B cell (primary cell): ENCODE measurements at regions of chr6 and their contacts with region 1.

Region 1: DNA sequence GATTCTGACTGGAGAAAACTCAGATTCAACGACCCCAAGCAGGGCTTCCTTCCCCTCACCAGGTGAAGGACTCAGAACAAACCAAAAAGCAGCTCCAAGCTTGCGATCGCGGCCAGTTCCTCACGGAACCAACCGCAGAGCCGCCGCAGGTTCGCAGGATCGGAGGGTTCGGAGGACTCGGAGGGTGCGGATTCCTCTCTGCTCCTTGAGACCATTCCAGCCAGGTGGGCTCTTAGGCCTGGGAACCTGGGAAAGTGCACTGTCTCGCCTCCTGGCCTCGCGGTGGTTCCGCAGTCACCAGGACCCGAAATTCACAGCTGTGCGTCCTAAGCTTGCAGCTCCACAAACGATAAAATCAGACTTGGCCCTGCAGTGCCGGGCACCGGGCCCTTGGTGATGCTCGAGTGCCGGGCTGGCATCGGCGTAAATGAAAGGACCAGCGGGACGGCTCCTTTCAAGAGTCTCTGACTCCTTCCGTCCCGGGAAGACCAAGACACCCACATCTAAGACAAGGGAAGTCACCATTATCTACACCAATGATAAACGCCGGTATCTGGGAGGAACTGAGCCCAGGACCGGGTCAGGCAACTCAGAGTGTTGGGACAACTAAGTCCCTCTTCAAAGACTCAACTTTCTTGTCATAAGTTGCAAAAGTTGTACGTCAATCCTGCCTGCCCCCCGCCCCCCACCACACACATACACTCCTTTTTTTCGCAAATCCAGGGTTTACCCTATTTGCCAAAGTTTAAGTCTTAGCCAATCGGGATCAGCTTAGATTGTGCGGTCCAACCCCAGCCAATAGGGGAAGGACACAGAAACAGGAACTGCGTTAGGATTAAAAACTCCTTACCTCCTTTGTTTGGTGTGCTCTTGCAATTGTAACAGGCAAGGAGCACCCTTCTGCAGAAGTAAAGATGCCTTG is 69.8 kb upstream of the PRSS16 start:
- DNase-seq: peak; percentile 90
- ATAC-seq: peak; percentile 86
- H3K4me3 ChIP-seq: peak overlapping the region; percentile 88 to 100 (median 98)
- H3K4me3 Mint-ChIP-seq: peak overlapping the region; percentile 96
- H3K27ac ChIP-seq: peak overlapping the region; percentile 34 to 78
- H3K27ac Mint-ChIP-seq: peak overlapping the region; percentile 91
- H3K4me1 ChIP-seq: peaks cover 0 to 7% of the 10 kb centered on the region in 2 donors
- H3K4me1 Mint-ChIP-seq: peaks cover 15% of the 10 kb centered on the region
- H3K27me3 ChIP-seq: no peaks in the 10 kb centered on the region
- H3K27me3 Mint-ChIP-seq: no peaks in the 10 kb centered on the region
- CTCF ChIP-seq: peak; percentile 71

Region 2: DNA sequence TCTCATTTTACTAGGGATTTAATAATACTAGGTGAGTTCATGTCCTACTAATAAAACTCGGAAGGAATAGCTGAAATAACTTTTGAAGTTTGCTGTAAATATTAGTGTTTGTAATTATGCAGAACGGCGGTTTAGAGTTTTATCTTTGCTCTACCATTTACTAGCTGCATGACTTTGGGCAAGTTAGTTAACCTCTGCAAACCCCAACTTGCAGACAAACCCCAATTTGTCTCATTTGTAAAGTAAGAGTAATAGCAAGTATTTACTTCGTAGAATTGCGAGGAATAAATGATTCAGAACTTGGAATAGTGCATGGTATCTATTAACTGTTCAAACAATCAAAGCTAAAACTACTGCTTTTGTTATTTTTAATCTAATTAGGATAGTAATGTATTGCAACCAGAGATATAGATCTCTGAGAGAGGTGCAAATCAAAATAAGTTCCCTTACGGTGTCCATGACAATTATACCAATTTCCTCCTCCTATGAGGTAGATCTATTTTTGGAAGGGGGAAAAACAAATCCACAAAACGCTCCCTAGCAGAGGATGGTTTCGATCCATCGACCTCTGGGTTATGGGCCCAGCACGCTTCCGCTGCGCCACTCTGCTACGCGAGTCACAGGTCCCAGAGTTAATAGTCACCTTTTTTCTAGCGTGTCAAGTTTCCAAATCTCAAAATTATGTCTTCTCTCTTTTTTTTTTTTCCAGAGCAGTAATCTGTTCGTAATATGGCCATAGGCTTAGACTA is 847.8 kb before region 1 on chr6:
- CTCF ChIA-PET with region 1: no interaction called
- POLR2A ChIA-PET with region 1: no interaction called
- intact Hi-C with region 1: no loop called
- DNase-seq: peak; percentile 63
- ATAC-seq: no peak
- H3K4me3 ChIP-seq: no peak overlapping the region
- H3K4me3 Mint-ChIP-seq: peak overlapping the region; percentile 64
- H3K27ac ChIP-seq: no peak overlapping the region
- H3K27ac Mint-ChIP-seq: peak overlapping the region; percentile 73
- H3K4me1 ChIP-seq: peaks cover 23 to 27% of the 10 kb centered on the region in 2 donors
- H3K4me1 Mint-ChIP-seq: peaks cover 26% of the 10 kb centered on the region
- H3K27me3 ChIP-seq: peaks cover 0 to 63% (median 62%) of the 10 kb centered on the region in 4 experiments
- H3K27me3 Mint-ChIP-seq: peaks cover 61% of the 10 kb centered on the region
- CTCF ChIP-seq: no peak

Region 3: DNA sequence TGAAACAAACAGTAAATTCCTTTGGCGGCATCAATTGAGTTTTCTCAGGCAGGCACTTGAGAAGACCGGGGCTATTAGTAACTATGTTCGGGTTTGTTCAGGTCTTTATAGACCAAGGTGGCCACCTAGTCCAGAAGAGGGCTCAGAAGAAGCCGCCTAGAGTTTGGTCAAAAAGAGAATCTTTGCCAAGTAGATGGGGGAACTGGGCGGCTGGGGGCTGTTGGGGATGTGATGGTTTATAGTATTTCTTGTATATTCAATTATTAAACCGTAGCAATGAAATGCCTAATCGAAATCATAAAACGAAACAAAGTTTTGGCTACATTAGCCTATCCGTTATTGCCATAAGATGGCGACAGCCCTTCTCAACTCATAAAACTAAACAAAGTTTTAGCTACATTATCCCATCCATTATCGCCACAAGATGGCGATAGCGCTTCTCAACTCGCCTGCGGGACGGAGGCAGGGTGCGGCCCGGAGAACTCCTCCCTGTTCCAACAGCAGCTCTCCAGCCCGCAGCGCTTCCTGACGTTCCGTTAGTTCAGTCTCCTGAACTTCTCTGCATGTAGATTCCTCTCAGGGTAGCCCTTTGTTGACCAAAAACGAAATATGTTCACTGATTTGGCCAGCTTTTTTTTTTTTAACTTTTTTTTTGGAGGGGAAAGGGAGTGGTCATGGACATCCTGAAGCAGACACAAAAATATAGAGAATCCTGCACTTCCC is 50.8 kb before region 1 on chr6:
- CTCF ChIA-PET with region 1: interaction called, 19 read pairs
- POLR2A ChIA-PET with region 1: no interaction called
- intact Hi-C with region 1: loop called (anchors 1 kb)
- DNase-seq: peak; percentile 93
- ATAC-seq: peak; percentile 76
- H3K4me3 ChIP-seq: peak overlapping the region; percentile 5 to 56 (median 40)
- H3K4me3 Mint-ChIP-seq: peak overlapping the region; percentile 87
- H3K27ac ChIP-seq: peak overlapping the region in 1 of 2 donors; percentile 56
- H3K27ac Mint-ChIP-seq: peak overlapping the region; percentile 85
- H3K4me1 ChIP-seq: peaks cover 13 to 18% of the 10 kb centered on the region in 2 donors
- H3K4me1 Mint-ChIP-seq: peaks cover 20% of the 10 kb centered on the region
- H3K27me3 ChIP-seq: no peaks in the 10 kb centered on the region
- H3K27me3 Mint-ChIP-seq: no peaks in the 10 kb centered on the region
- CTCF ChIP-seq: peak; percentile 92

Region 4: DNA sequence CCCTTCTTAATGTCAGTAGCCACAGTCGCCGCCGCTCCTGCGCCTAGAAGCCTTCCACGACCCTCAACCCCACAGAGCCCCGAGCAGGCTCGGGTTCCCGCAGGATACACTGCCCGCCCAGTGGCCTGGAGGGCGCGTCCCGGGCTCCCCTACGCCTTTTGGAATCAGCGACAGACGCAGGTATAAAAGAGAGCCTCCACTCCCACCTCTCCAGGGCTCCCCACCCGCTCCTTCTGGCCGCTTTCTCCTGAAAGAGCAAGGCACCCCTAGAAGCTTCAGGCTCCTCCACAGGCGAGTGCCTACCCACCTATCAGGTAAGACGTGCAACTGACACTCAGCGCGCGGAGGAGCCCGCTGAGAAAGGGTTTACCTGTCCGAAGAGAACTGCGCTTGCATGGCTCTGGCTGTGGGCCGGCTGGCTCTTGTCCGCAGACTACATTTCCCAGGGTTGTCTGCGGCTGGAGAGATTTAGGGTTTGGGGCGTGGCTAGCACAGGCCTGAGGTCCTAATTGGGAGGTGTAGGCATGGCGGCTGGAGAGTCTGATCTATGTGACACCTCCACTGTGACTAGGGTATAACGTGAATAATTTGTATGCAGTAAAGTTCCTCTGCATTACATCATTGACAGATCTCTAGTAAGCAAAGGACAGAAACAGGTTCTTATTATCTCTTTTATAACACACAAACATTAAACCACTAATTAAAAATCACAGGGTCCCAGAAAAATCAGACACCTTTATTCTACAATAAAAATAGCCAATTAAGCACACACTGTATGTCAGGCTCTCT is 197.3 kb after region 1 on chr6:
- CTCF ChIA-PET with region 1: no interaction called
- POLR2A ChIA-PET with region 1: no interaction called
- intact Hi-C with region 1: loop called (anchors 10 kb)
- DNase-seq: peak; percentile 78
- ATAC-seq: peak; percentile 100
- H3K4me3 ChIP-seq: peak overlapping the region in 4 of 5 experiments; percentile 58 to 77 (median 68)
- H3K4me3 Mint-ChIP-seq: peak overlapping the region; percentile 84
- H3K27ac ChIP-seq: no peak overlapping the region
- H3K27ac Mint-ChIP-seq: peak overlapping the region; percentile 42
- H3K4me1 ChIP-seq: peaks cover 8 to 17% of the 10 kb centered on the region in 2 donors
- H3K4me1 Mint-ChIP-seq: peaks cover 16% of the 10 kb centered on the region
- H3K27me3 ChIP-seq: peaks cover 0 to 13% (median 7%) of the 10 kb centered on the region in 4 experiments
- H3K27me3 Mint-ChIP-seq: peaks cover 25% of the 10 kb centered on the region
- CTCF ChIP-seq: no peak

Region 5: GRCh38 chr6:27553123-27553904 is 375.6 kb after region 1 on chr6:
- CTCF ChIA-PET with region 1: no interaction called
- POLR2A ChIA-PET with region 1: no interaction called
- intact Hi-C with region 1: no loop called
- DNase-seq: peak; percentile 36
- ATAC-seq: no peak
- H3K4me3 ChIP-seq: no peak overlapping the region
- H3K4me3 Mint-ChIP-seq: peak overlapping the region; percentile 54
- H3K27ac ChIP-seq: no peak overlapping the region
- H3K27ac Mint-ChIP-seq: no peak overlapping the region
- H3K4me1 ChIP-seq: peaks cover 3 to 15% of the 10 kb centered on the region in 2 donors
- H3K4me1 Mint-ChIP-seq: peaks cover 10% of the 10 kb centered on the region
- H3K27me3 ChIP-seq: peaks cover 1 to 65% (median 54%) of the 10 kb centered on the region in 4 experiments
- H3K27me3 Mint-ChIP-seq: peaks cover 64% of the 10 kb centered on the region
- CTCF ChIP-seq: no peak

Region 6: DNA sequence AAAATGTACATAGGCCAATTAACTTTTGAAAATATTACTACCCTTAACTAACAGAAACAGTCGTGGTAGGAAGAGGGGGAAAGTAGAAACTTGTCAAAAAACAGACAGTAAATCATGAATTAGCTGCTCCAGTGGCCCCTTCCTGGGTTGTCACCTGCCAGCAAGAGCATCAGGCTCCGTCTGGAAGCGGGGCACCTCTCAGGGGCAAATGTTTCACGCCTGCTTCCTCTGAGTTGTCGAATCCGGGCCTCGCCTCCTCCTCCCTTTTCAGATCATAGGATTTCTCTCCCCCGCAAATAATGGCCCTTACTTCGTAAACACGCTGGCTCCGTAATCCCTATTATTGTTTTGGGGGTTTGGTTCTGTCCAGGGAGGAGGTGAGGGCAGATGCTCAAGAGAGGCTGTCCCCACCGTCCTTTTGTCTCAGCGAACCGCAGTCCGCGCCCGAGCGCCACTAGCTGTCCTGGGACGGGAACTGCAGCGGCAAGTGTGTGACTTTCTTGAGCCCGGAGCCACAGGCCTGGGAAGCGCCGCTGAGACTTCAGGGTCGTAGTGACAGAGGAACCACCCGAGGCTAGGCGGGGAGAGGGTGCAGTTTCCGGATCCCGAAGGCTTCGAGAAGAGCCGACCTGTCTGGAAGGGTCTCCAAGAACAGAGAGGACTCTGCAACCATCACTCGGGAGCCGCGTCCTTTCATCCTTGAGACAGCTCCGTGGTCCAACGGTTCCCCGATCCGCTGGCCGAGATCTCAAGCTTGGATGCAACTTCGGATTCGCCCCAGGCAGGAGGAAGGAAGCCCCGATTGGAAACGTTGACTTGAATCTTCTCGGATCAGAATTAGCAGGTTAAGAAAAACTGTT is 509.6 kb after region 1 on chr6:
- CTCF ChIA-PET with region 1: no interaction called
- POLR2A ChIA-PET with region 1: interaction called, 3 read pairs
- intact Hi-C with region 1: loop called (anchors 2 kb)
- DNase-seq: peak; percentile 87
- ATAC-seq: peak; percentile 73
- H3K4me3 ChIP-seq: peak overlapping the region; percentile 27 to 99 (median 77)
- H3K4me3 Mint-ChIP-seq: peak overlapping the region; percentile 93
- H3K27ac ChIP-seq: peak overlapping the region in 1 of 2 donors; percentile 32
- H3K27ac Mint-ChIP-seq: peak overlapping the region; percentile 91
- H3K4me1 ChIP-seq: peaks cover 7 to 15% of the 10 kb centered on the region in 2 donors
- H3K4me1 Mint-ChIP-seq: peaks cover 16% of the 10 kb centered on the region
- H3K27me3 ChIP-seq: peaks cover 0 to 8% (median 2%) of the 10 kb centered on the region in 4 experiments
- H3K27me3 Mint-ChIP-seq: peaks cover 4% of the 10 kb centered on the region
- CTCF ChIP-seq: peak; percentile 69

Region 7: GRCh38 chr6:27795697-27796494 is 618.1 kb after region 1 on chr6:
- CTCF ChIA-PET with region 1: interaction called, 35 read pairs
- POLR2A ChIA-PET with region 1: no interaction called
- intact Hi-C with region 1: no loop called
- DNase-seq: peak; percentile 89
- ATAC-seq: peak; percentile 59
- H3K4me3 ChIP-seq: no peak overlapping the region
- H3K4me3 Mint-ChIP-seq: no peak overlapping the region
- H3K27ac ChIP-seq: no peak overlapping the region
- H3K27ac Mint-ChIP-seq: peak overlapping the region; percentile 17
- H3K4me1 ChIP-seq: peaks cover 19 to 25% of the 10 kb centered on the region in 2 donors
- H3K4me1 Mint-ChIP-seq: peaks cover 22% of the 10 kb centered on the region
- H3K27me3 ChIP-seq: peaks cover 0 to 10% (median 5%) of the 10 kb centered on the region in 4 experiments
- H3K27me3 Mint-ChIP-seq: peaks cover 12% of the 10 kb centered on the region
- CTCF ChIP-seq: peak; percentile 84